ENCODE measurements at regions of chr17 and their contacts with region 1.

Region 1: DNA sequence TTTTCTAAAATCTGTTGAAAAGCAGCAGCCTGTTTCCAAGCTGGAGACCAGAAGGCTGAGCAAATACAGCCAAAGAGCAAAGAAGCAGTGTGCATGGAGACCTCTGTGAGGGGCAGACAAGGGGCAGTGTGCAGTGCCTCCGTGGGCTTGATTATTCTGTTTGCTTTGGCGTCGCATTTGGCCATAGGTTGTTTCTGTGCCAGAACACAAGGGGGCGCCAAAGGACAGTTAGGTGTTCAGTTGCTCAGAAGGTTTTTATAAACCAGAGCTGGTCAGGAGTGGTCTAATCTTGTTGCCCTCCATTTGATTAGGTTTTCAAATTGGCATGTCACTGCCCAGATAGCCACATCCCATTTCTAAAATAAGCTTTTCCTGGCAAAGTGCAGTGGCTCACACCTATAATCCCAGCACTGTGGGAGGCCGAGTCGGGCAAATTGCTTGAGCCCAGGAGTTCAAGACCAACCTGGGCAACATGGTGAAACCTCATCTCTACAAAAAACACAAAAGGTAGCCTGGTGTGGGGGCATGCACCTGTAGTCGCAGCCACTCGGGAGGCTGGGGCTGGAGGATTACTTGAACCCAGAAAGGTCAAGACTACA is 10.6 kb downstream of the MYH3 start:
- DNase-seq: peak; percentile 72
- CTCF ChIP-seq: peak; percentile 90

Region 2: DNA sequence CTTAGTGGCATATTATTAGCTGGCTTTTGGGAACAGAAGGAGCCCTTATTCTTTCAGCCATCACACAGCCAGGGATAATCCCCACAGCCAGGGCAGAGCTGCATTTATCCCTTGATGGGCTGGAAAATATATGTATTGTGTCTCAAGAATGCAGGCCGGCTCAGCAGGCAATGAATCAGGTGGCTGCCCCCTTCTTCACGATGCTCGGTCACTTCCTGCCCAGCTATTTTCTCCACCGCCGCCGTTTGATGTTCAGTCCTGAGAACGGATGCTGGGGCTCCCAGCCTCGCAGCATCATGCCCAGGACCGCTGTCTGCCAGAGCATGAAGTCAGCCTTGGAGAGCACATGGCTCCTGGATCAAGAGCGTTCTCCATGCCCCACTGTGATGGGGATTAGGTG is 14.9 kb after region 1 on chr17:
- CTCF ChIA-PET with region 1: interaction called, 14 read pairs
- POLR2A ChIA-PET with region 1: no interaction called
- DNase-seq: no peak
- CTCF ChIP-seq: no peak

Region 3: DNA sequence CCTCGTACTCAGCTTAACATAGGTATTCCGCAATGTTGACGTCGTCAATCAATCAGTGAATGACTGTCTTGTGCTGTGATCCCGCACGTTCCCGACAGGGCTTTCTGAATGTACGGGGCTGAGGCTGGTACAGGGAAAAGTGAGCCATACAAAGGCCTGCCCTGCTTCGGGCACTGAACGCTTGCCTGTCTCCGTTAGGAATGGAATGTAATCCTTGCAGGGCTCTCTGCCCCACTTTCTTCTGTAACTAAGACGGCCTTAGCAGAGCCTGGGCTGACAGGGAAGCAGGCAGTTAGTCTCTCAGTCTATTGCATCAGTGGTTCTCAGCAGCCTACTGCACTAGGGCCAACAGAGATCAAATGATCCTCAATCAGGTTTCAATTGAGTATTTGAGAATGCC is 26.8 kb after region 1 on chr17:
- CTCF ChIA-PET with region 1: interaction called, 15 read pairs
- POLR2A ChIA-PET with region 1: no interaction called
- DNase-seq: no peak
- CTCF ChIP-seq: no peak

Region 4: GRCh38 chr17:10836966-10837590 is 190.6 kb after region 1 on chr17:
- CTCF ChIA-PET with region 1: interaction called, 79 read pairs
- POLR2A ChIA-PET with region 1: no interaction called
- DNase-seq: no peak
- CTCF ChIP-seq: no peak

Region 5: GRCh38 chr17:11712445-11712844 is 1066.0 kb after region 1 on chr17:
- CTCF ChIA-PET with region 1: no interaction called
- POLR2A ChIA-PET with region 1: no interaction called
- DNase-seq: no peak
- CTCF ChIP-seq: no peak

Measured in GM10248 (cell line).